GM12878 (cell line): ENCODE measurements at regions of chr19 and their contacts with region 1.

Region 1: DNA sequence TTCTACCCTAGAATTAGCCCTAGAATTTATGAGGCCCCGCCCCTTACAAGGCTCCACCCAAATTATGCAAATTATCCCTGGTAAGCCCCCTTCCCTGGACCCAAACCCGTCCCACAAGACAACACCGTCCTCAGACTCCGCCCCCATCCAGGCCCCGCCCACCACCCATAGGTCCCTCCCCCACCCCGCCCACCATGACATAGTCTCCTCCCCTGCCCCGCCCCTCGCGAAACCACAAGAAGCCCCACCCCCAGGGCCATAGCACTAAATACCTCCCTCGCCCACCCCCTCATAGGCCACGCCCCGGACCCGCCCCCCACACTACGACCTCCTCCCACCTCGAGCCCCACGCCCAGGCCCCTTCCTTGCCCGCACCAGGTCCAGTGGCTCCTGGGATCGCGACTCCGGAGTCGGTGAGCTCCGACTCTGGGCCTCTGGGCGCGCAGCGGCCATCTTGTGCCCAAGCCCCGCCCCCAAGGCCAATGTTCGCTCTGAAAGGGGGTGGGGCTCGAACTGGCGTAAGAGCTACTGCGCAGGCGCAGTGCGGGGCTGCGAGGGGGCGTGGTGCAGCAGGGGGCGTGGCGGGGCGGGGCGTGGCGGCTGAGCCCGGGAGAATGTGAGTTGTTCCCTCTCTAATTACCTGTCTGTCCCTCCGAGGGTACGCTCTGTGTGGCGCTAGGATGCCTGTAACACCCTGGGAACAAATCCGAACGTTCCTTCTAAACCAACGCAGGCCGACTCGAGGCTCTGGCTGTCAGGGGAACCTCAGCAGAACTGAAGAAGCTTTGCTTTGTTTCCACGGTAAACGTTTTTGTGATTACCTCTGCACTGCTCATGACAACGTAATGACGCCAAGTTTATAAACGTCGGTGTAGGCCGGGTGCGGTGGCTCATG is at the start of gene ZNF784:
- DNase-seq: no peak
- ATAC-seq: peak; percentile 86
- H3K4me3 ChIP-seq: peak within 1 kb of the TSS; percentile 72; the same call in 1 of the 2 replicates
- H3K27ac ChIP-seq: peak within 1 kb of the TSS; percentile 66
- H3K4me1 ChIP-seq: peaks cover 9% of the 10 kb centered on the region; the same call in 1 of the 2 replicates
- H3K27me3 ChIP-seq: no peaks in the 10 kb centered on the region
- CTCF ChIP-seq: no peak
- EP300 ChIP-seq: no peak
- POLR2A ChIP-seq: peak; percentile 91
- RAD21 ChIP-seq: no peak
- polyA plus RNA-seq, gene ZNF784: 0.10 to 0.97 TPM

Region 2: DNA sequence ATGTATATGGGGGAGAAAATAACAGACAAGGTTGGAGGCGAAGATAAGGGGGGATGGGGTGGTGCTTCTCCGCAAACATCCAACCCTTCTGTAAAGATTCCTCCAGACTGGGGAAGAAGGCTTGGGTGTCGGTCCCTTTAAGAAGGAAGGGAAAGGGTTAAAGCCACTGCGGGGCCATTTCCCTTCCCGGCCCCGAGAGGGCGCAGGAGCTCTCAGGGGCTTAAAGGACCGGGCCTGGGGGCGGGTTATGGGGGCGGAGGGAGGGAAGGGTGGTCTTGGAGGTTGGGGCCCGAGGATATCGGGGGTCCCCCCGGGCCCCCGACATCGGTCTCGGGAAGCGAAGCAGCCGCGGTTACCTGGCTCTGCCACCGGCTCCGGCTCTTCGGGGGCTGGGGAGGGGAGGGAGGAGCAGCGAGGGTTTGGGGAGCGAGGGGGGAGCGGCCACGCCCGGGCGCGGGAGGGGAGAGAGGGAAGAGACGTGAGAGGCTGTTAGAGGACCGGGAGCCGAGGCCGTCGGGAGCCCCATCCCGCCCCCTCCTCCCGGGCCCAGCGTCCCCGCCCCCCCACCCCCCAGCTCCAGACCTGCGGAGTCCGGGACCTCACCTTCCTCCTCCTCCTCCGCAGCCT is 478.2 kb before region 1 on chr19:
- CTCF ChIA-PET with region 1: interaction called, 4 read pairs
- POLR2A ChIA-PET with region 1: no interaction called
- RAD21 ChIA-PET with region 1: no interaction called
- SMC1A ChIA-PET with region 1: no interaction called
- in situ Hi-C with region 1: loop called (anchors 5 kb)
- intact Hi-C with region 1: no loop called
- DNase-seq: no peak
- ATAC-seq: peak; percentile 68
- H3K4me3 ChIP-seq: no peak overlapping the region
- H3K27ac ChIP-seq: no peak overlapping the region
- H3K4me1 ChIP-seq: no peaks in the 10 kb centered on the region
- H3K27me3 ChIP-seq: no peaks in the 10 kb centered on the region; a peak in 2 of 4 replicates
- CTCF ChIP-seq: peak; percentile 37 to 70 (median 45)
- EP300 ChIP-seq: no peak
- POLR2A ChIP-seq: no peak
- RAD21 ChIP-seq: peak; percentile 38; the same call in 1 of the 2 replicates

Region 3: DNA sequence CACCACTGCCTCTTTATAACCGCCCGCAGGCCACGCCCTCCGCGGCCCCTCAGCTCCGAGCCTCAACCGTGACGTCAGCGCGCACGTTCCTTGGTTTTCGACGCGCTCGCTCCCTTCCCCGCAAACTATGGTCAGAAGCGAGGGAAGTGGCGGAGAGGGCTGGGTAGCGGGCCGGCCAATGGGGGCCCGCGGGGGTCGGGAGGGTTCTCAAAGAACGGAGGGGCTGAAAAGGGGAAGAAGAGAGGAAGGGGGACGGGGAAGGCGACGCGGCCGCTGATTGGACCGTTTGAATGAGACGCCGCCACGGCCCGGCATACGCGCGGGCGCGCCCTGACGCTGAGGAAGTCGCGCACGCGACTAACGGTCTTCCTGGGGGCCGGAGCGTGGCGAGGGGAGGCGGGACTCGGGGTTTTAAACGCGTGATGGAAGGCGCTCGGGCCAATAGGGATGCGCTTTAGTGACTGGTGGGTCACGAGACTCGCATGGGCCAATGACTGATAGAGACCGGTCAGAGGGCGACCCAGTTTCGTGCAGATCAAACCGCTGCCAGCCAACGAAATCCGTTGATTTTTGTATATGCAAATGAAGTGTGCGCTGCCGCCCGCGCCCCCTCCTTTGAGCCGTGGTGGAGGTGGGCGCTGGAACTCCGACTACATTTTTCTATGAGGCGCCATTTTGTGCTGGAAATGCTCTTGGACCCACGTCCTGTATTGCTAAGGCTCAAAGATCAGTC is 216.4 kb before region 1 on chr19:
- CTCF ChIA-PET with region 1: no interaction called
- POLR2A ChIA-PET with region 1: interaction called, 3 read pairs
- RAD21 ChIA-PET with region 1: no interaction called
- SMC1A ChIA-PET with region 1: no interaction called
- in situ Hi-C with region 1: no loop called
- intact Hi-C with region 1: loop called (anchors 1 kb)
- DNase-seq: peak; percentile 97
- ATAC-seq: peak; percentile 96
- H3K4me3 ChIP-seq: peak overlapping the region; percentile 93
- H3K27ac ChIP-seq: peak overlapping the region; percentile 98
- H3K4me1 ChIP-seq: peaks cover 20% of the 10 kb centered on the region
- H3K27me3 ChIP-seq: no peaks in the 10 kb centered on the region
- CTCF ChIP-seq: no peak
- EP300 ChIP-seq: 0 out of 4 replicates have a peak, but pooled peaks of 1 of the 2 experiments have one; percentile 39
- POLR2A ChIP-seq: peak; percentile 39; the same call in 1 of the 2 replicates
- RAD21 ChIP-seq: no peak

Region 4: DNA sequence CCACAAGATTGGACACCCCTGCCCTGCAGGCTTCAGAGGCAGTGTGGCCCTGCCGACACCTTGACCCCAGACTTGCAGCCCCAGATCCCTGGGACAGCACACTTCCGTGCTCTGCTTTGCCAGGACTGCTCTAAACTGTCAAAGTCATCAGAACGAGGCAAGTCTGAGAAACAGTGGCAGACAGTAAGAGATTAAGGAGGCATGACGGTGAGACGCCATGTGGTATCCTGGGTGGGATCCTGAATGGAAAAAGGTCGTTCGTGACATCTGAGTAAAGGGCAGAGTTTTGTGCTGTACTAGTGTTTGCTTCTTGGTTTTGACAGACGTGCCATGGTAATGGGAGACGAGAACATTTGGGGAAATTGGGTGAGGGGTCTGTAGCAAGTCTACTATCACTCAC is 57.5 kb before region 1 on chr19:
- CTCF ChIA-PET with region 1: no interaction called
- POLR2A ChIA-PET with region 1: no interaction called
- RAD21 ChIA-PET with region 1: no interaction called
- SMC1A ChIA-PET with region 1: no interaction called
- in situ Hi-C with region 1: no loop called
- intact Hi-C with region 1: no loop called
- DNase-seq: no peak
- ATAC-seq: no peak
- H3K4me3 ChIP-seq: no peak overlapping the region
- H3K27ac ChIP-seq: no peak overlapping the region
- H3K4me1 ChIP-seq: no peaks in the 10 kb centered on the region
- H3K27me3 ChIP-seq: no peaks in the 10 kb centered on the region
- CTCF ChIP-seq: no peak
- EP300 ChIP-seq: no peak
- POLR2A ChIP-seq: no peak
- RAD21 ChIP-seq: no peak

Region 5: GRCh38 chr19:55605207-55605636 is 19.1 kb before region 1 on chr19:
- CTCF ChIA-PET with region 1: interaction called, 76 read pairs
- POLR2A ChIA-PET with region 1: interaction called, 21 read pairs
- RAD21 ChIA-PET with region 1: interaction called, 29 read pairs
- SMC1A ChIA-PET with region 1: interaction called, 8 read pairs
- in situ Hi-C with region 1: no loop called
- intact Hi-C with region 1: no loop called
- DNase-seq: peak; percentile 94
- ATAC-seq: peak; percentile 86
- H3K4me3 ChIP-seq: peak overlapping the region; percentile 69; the same call in 1 of the 2 replicates
- H3K27ac ChIP-seq: peak overlapping the region; percentile 90
- H3K4me1 ChIP-seq: peaks cover 10% of the 10 kb centered on the region; the same call in 1 of the 2 replicates
- H3K27me3 ChIP-seq: no peaks in the 10 kb centered on the region
- CTCF ChIP-seq: no peak
- EP300 ChIP-seq: no peak
- POLR2A ChIP-seq: no peak
- RAD21 ChIP-seq: no peak

Region 6: GRCh38 chr19:55611983-55612645 is 12.2 kb before region 1 on chr19:
- CTCF ChIA-PET with region 1: interaction called, 76 read pairs
- POLR2A ChIA-PET with region 1: interaction called, 21 read pairs
- RAD21 ChIA-PET with region 1: interaction called, 29 read pairs
- SMC1A ChIA-PET with region 1: no interaction called
- in situ Hi-C with region 1: no loop called
- intact Hi-C with region 1: no loop called
- DNase-seq: no peak
- ATAC-seq: peak; percentile 65
- H3K4me3 ChIP-seq: no peak overlapping the region
- H3K27ac ChIP-seq: no peak overlapping the region
- H3K4me1 ChIP-seq: peaks cover 4% of the 10 kb centered on the region
- H3K27me3 ChIP-seq: no peaks in the 10 kb centered on the region
- CTCF ChIP-seq: no peak
- EP300 ChIP-seq: no peak
- POLR2A ChIP-seq: no peak
- RAD21 ChIP-seq: no peak

Region 7: DNA sequence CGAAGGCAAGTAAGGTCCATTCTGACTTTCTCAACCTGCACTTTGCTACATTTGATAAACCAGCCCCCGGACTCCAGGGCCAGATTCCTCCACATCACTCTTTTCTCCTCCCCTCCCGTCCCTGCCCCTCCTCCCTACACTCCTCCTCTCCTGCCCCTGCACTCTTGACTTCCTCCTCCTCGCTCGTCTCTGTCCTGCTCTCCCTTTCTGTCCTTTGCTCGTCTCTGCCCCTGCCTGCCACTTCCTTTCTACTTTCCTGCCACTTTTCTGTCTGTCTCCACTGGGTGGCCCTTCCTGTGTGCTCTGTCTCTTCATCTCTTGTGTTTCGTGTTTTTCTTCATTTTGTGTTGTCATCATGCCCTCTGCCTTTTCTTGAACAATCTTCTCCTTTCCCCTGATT is 37.5 kb after region 1 on chr19:
- CTCF ChIA-PET with region 1: no interaction called
- POLR2A ChIA-PET with region 1: no interaction called
- RAD21 ChIA-PET with region 1: no interaction called
- SMC1A ChIA-PET with region 1: no interaction called
- in situ Hi-C with region 1: no loop called
- intact Hi-C with region 1: no loop called
- DNase-seq: no peak
- ATAC-seq: no peak
- H3K4me3 ChIP-seq: no peak overlapping the region
- H3K27ac ChIP-seq: no peak overlapping the region
- H3K4me1 ChIP-seq: peaks cover 12% of the 10 kb centered on the region
- H3K27me3 ChIP-seq: no peaks in the 10 kb centered on the region
- CTCF ChIP-seq: no peak
- EP300 ChIP-seq: no peak
- POLR2A ChIP-seq: no peak
- RAD21 ChIP-seq: no peak